Sciatic nerve (tissue), 2 donors: ENCODE measurements at regions of chr1 and their contacts with region 1.

Region 1: GRCh38 chr1:29245876-29246275 is 9.6 kb downstream of the PTPRU start:
- DNase-seq: no peak
- ATAC-seq: peak; percentile 61

Region 2: DNA sequence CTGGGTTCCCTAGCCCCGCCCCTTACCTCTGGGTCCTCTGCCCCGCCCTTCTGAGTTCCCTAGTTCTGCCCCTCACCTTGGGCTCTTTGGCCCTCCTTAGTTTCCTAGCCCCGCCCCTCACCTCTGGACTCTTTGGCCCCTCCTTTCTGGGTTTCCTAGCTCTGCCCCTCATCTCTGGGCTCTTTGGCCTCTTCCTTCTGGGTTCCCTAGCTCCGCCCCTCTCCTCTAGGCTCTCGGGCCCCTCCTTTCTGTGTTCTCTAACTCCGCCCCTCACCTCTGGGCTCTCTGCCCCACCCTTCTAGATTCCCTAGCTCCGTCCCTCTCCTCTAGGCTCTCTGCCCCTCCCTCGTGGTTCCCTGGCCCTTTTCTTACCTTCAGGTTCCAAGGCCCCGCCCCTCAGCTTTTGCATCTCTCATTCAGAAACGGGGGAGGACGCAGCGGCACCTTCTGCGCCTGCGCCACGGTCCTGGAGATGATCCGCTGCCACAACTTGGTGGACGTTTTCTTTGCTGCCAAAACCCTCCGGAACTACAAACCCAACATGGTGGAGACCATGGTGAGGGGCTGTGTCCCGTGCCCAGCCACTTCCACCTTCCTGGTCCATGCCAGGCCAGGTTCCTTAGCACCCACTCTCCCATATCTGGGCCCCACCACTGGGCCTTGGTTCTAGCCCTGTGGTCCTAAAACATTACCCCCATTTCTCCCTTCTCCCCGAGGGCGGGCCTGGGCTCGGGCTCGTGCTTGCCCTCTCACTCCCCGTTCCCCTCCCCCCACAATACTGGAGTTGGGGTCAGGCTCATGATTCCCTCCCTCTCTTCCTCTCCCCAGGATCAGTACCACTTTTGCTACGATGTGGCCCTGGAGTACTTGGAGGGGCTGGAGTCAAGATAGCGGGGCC is 79.1 kb after region 1 on chr1:
- intact Hi-C with region 1: loop called (anchors 10 kb)
- DNase-seq: no peak
- ATAC-seq: peak; percentile 41